OCI-LY7 (cell line): ENCODE measurements at regions of chr15 and their contacts with region 1.

Region 1: GRCh38 chr15:52050416-52050815 is 31.4 kb downstream of the MAPK6 start:
- DNase-seq: no peak
- H3K4me3 ChIP-seq: no peak overlapping the region
- H3K27ac ChIP-seq: no peak overlapping the region
- H3K4me1 ChIP-seq: peaks cover 25% of the 10 kb centered on the region
- CTCF ChIP-seq: no peak

Region 2: GRCh38 chr15:51888593-51889195 is 161.7 kb before region 1 on chr15:
- CTCF ChIA-PET with region 1: no interaction called
- POLR2A ChIA-PET with region 1: no interaction called
- intact Hi-C with region 1: no loop called
- DNase-seq: peak; percentile 41
- H3K4me3 ChIP-seq: no peak overlapping the region
- H3K27ac ChIP-seq: no peak overlapping the region
- H3K4me1 ChIP-seq: peaks cover 3% of the 10 kb centered on the region
- CTCF ChIP-seq: peak; percentile 99

Region 3: DNA sequence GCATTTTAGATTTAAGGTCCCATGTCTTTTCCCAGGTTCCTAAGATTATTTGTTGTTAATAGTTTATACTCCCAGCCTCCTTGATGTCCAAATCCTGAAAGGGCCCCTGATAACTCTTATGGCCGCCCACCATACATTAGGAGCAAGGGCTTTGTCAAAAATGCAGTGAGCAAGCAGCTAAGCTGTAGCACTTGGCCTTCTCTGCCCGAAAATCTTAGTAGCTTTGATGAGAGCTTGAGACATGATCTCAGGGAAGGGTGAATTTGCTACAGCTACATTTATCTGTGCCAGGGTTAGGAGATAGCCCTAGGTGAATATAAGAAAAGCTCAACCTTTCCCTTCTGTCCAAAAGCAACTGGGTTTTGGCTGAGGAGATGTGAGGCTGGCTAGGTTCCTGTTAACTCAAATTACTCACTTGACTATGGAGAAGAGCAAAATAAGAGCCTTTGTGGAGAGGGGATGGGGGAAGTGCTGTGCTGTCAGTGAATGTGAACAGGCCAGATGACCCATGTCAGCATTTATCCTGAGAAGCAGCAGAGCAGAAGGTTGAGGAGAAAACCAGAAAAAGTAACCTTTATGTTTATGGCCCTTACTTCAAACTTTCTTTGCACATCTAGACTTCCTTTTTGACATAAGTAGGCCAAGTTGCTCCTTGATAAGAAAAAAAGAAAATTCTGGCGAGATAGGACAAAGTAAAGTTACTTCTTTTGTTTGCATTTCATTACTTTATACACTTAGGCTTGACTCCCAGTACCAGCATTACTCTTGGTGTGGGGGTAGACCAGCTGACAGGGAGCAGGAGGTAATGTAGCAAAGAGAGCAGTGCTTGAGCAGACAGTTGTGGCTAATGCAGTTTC is 10.3 kb before region 1 on chr15:
- CTCF ChIA-PET with region 1: no interaction called
- POLR2A ChIA-PET with region 1: interaction called, 10 read pairs
- intact Hi-C with region 1: no loop called
- DNase-seq: peak; percentile 25
- H3K4me3 ChIP-seq: no peak overlapping the region
- H3K27ac ChIP-seq: peak overlapping the region; percentile 20
- H3K4me1 ChIP-seq: peaks cover 85% of the 10 kb centered on the region
- CTCF ChIP-seq: no peak

Region 4: GRCh38 chr15:52060501-52060900 is 10.1 kb after region 1 on chr15:
- CTCF ChIA-PET with region 1: no interaction called
- POLR2A ChIA-PET with region 1: no interaction called
- intact Hi-C with region 1: no loop called
- DNase-seq: no peak
- H3K4me3 ChIP-seq: no peak overlapping the region
- H3K27ac ChIP-seq: no peak overlapping the region
- H3K4me1 ChIP-seq: no peaks in the 10 kb centered on the region
- CTCF ChIP-seq: no peak